AG04450 (cell line): ENCODE measurements at regions of chr14 and their contacts with region 1.

Region 1: GRCh38 chr14:90758028-90758889 is 58.0 kb downstream of the TTC7B start:
- DNase-seq: peak; percentile 74
- H3K4me3 ChIP-seq: peak overlapping the region; percentile 78
- H3K27ac ChIP-seq: peak overlapping the region; percentile 57
- H3K27me3 ChIP-seq: no peaks in the 10 kb centered on the region
- CTCF ChIP-seq: peak; percentile 84

Region 2: DNA sequence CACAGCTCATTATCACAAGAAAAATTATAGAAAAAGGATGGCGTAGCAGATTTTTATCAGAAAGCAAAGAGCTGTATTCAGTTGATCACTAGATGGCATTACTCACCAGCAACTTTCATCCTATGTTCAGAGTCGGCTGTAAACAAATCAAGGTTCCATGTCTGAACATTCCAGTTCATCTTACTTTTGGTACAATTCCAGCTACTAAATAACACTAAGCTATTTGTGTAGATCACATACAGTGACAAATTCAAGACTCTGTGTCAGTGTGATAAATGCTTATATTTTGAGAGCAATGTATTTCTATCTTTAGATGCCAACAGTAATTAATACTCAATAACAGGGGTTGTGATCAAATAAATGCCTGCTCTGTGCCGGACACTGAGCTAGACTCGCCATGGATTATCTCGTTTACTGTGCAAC is 456.6 kb before region 1 on chr14:
- CTCF ChIA-PET with region 1: interaction called, 104 read pairs
- POLR2A ChIA-PET with region 1: interaction called, 3 read pairs
- DNase-seq: peak; percentile 41
- H3K4me3 ChIP-seq: no peak overlapping the region
- H3K27ac ChIP-seq: no peak overlapping the region
- H3K27me3 ChIP-seq: no peaks in the 10 kb centered on the region
- CTCF ChIP-seq: peak; percentile 55

Region 3: GRCh38 chr14:90388437-90388836 is 369.8 kb before region 1 on chr14:
- CTCF ChIA-PET with region 1: interaction called, 12 read pairs
- POLR2A ChIA-PET with region 1: no interaction called
- DNase-seq: peak; percentile 57
- H3K4me3 ChIP-seq: no peak overlapping the region
- H3K27ac ChIP-seq: peak overlapping the region; percentile 65
- H3K27me3 ChIP-seq: no peaks in the 10 kb centered on the region
- CTCF ChIP-seq: no peak

Region 4: DNA sequence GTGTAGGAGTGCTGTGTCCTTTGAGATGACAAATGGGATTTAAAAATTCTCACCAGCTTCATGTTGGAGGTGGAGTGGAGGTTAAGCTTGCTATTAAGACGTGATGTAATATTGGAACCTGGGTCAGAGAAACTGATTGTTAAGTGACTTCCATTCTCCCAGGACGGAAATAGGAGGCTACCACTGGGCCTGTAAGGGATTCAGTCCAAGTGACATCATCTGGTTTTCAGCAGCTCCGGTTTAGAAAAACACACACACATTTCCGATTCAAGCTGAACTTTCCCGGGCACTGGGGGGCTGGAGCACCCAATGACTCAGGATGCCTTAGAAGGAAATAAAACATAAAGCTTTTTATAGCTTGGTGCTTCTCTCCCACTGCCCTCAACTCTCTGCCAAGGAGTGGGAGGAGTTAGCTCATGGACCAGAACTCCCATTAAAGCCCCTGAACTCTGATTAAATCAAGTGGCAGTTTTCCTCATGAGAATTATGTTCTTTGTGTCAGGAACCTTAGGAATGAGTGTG is 349.0 kb before region 1 on chr14:
- CTCF ChIA-PET with region 1: interaction called, 85 read pairs
- POLR2A ChIA-PET with region 1: no interaction called
- DNase-seq: peak; percentile 90
- H3K4me3 ChIP-seq: no peak overlapping the region
- H3K27ac ChIP-seq: peak overlapping the region; percentile 72
- H3K27me3 ChIP-seq: no peaks in the 10 kb centered on the region
- CTCF ChIP-seq: no peak

Region 5: GRCh38 chr14:90743425-90743824 is 14.8 kb before region 1 on chr14:
- CTCF ChIA-PET with region 1: interaction called, 24 read pairs
- POLR2A ChIA-PET with region 1: no interaction called
- DNase-seq: no peak
- H3K4me3 ChIP-seq: no peak overlapping the region
- H3K27ac ChIP-seq: no peak overlapping the region
- H3K27me3 ChIP-seq: no peaks in the 10 kb centered on the region
- CTCF ChIP-seq: no peak

Region 6: DNA sequence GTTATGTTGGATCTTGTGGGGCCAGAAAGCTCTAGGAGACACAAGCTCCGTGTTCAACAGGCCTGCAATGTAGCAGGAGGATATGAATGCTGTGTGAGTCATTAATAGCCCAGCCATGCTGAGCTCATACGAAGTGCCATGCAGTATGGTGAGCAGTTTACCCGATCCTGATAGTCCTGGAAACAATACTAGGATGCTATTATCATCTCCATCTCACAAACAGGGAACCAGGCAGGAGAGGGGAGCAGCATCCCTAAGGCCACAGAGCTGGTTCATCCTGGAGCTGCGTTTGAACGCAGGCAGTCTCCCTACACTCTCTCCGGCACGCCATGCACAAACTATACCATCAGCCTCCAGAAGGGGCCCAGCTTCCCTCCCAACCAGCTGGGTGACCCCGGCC is 37.5 kb after region 1 on chr14:
- CTCF ChIA-PET with region 1: interaction called, 16 read pairs
- POLR2A ChIA-PET with region 1: no interaction called
- DNase-seq: peak; percentile 59
- H3K4me3 ChIP-seq: no peak overlapping the region
- H3K27ac ChIP-seq: peak overlapping the region; percentile 59
- H3K27me3 ChIP-seq: no peaks in the 10 kb centered on the region
- CTCF ChIP-seq: 0 out of 2 replicates have a peak, but pooled peaks have one; percentile 10

Region 7: DNA sequence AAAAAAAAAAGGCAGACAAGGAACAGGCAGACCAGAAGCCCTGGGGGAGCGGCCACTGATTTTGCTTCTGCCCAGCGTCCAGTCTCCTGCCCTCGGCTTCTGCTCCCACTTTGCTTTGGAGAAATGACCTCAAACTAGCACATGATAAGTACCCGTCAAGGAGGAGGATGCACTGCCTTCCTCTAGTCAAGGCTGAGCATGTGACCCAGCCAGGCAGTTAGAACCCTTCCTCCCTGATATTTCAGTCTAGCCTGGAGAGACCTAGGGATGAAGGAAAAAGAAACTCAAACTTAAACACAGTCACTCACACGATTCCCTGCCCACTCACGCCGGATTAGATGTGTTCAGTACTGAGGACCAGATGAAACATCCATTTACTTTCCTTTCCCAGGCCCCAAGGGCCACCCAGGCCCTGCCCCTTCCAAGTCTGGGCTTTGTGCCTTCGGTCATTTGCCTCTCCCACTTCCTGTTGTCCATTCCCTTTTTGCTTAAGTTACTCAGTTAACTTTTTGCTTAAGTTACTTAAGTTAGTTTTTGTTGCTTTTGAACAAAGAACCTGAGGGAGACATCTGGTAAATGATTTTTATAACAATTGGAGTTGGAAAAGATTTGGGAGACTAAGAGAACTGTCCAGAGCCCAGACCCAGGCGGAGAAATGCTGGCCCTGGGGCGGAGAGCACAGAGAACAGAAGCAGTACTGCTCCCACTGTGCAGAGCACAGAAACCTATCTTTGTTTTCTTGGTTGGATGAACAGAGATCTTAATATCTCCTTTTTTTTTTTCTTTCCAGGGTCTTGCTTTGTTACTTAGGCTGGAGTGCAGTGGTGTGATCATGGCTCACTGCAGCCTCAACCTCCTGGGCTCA is 81.0 kb after region 1 on chr14:
- CTCF ChIA-PET with region 1: no interaction called
- POLR2A ChIA-PET with region 1: no interaction called
- DNase-seq: no peak
- H3K4me3 ChIP-seq: no peak overlapping the region
- H3K27ac ChIP-seq: no peak overlapping the region
- H3K27me3 ChIP-seq: no peaks in the 10 kb centered on the region
- CTCF ChIP-seq: no peak